Activated naive CD4-positive, alpha-beta T cell treated with anti-CD3 and anti-CD28 coated beads for 36 hours (primary cell): ENCODE measurements at regions of chr7 and their contacts with region 1.

Region 1: GRCh38 chr7:23431702-23432199 is 38.5 kb downstream of the IGF2BP3 start:
- DNase-seq: no peak
- H3K4me3 Mint-ChIP-seq: no peak overlapping the region
- H3K27ac Mint-ChIP-seq: no peak overlapping the region
- H3K4me1 Mint-ChIP-seq: peaks cover 4% of the 10 kb centered on the region
- H3K27me3 Mint-ChIP-seq: peaks cover 23% of the 10 kb centered on the region

Region 2: DNA sequence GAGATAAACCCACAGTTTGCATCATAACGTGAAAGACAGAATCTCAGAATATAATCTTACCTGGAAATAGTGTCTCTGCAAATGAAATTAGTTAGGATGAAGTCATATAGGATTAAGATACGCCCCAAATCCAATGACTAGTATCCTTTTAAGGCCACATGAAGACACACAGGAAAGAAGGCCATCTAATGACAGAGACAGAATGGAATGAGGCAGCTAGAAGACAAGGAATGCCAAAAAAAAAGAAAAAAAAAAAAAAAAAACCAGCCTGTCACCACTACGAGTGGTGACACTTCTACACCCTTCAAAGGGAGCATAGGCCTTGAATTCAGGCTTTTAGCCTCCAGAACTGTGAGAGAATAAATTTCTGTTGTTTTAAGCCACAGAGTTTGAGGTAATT is 500.7 kb before region 1 on chr7:
- CTCF ChIA-PET with region 1: no interaction called
- intact Hi-C with region 1: no loop called
- DNase-seq: no peak
- H3K4me3 Mint-ChIP-seq: no peak overlapping the region
- H3K27ac Mint-ChIP-seq: no peak overlapping the region
- H3K4me1 Mint-ChIP-seq: no peaks in the 10 kb centered on the region
- H3K27me3 Mint-ChIP-seq: peaks cover 4% of the 10 kb centered on the region

Region 3: GRCh38 chr7:23191021-23191420 is 240.7 kb before region 1 on chr7:
- CTCF ChIA-PET with region 1: no interaction called
- intact Hi-C with region 1: no loop called
- DNase-seq: no peak
- H3K4me3 Mint-ChIP-seq: no peak overlapping the region
- H3K27ac Mint-ChIP-seq: no peak overlapping the region
- H3K4me1 Mint-ChIP-seq: peaks cover 6% of the 10 kb centered on the region
- H3K27me3 Mint-ChIP-seq: no peaks in the 10 kb centered on the region

Region 4: DNA sequence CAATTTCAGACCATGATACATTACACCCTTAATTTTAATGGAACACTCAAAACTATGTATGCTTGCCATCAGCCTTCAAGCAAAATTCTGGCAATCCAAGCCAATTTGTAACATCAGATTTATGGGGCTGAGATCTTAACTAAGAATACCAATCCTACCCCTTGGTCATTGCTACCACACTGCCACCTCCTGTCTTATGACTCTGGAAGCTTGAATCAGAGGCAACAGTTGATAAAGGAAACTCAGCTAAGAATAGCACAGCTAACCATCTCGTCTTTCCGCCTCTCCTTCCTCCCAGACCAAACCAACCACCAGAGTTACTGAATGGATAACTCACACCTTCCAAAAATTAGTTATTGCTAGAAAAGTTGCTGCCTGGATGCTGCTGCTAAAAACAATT is 31.1 kb after region 1 on chr7:
- CTCF ChIA-PET with region 1: interaction called, 14 read pairs
- intact Hi-C with region 1: no loop called
- DNase-seq: peak; percentile 56
- H3K4me3 Mint-ChIP-seq: no peak overlapping the region
- H3K27ac Mint-ChIP-seq: no peak overlapping the region
- H3K4me1 Mint-ChIP-seq: peaks cover 5% of the 10 kb centered on the region
- H3K27me3 Mint-ChIP-seq: peaks cover 64% of the 10 kb centered on the region

Region 5: GRCh38 chr7:23712368-23713284 is 280.9 kb after region 1 on chr7:
- CTCF ChIA-PET with region 1: no interaction called
- intact Hi-C with region 1: loop called (anchors 1 kb)
- DNase-seq: no peak
- H3K4me3 Mint-ChIP-seq: no peak overlapping the region
- H3K27ac Mint-ChIP-seq: no peak overlapping the region
- H3K4me1 Mint-ChIP-seq: no peaks in the 10 kb centered on the region
- H3K27me3 Mint-ChIP-seq: peaks cover 2% of the 10 kb centered on the region